Posterior vena cava (tissue), 2 donors: ENCODE measurements at regions of chr1 and their contacts with region 1.

Region 1: DNA sequence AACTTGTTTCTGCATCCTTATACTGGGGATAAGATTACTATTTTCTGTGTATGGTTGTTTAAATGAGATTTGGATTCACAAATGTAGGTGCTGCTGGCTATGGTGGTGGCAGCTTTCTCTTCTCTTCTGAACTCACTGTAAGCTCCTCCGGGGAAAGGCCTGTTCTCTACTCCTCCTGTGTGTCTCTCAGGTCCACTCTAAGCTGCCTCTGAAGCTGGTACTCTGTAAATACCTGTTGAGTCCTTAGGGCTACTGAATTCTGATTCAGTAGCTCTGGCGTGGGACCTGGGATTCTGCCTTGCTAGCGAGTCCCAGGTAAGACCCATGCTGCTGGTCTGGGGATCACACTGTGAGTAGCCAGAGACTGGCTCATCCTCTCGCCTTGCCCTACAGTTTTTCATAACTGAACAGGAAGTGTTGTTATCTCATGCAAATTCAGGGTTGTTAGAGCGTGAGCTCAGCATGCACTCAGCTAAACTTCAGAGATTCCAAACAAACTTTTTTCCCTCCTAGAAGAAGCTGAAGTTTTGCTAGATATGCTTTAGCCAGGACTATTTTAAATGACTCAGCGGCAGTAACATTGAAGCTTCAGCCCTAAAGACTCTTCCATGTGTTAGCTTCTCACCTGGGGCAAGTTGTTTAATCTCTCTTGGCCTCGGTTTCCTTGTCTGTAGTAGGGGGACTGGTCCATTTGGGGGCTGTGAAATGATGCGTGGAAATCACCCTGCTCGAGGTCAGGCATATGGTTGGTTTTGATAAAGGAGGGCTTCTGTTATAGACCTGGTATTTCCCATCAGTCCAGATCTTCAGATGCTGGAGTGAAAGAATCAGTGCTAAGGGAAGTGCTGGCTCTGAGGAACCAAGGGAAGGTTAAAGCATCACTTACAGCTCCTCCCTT is 271.5 kb upstream of the TMEM51 start:
- DNase-seq: no peak

Region 2: GRCh38 chr1:13583595-13583965 is 1298.4 kb before region 1 on chr1 and contains the start of gene PDPN:
- intact Hi-C with region 1: no loop called
- DNase-seq: peak; percentile 85
- total RNA-seq, gene PDPN: 28.5 to 40.9 TPM

Region 3: GRCh38 chr1:14648896-14649855 is 232.8 kb before region 1 on chr1:
- intact Hi-C with region 1: no loop called
- DNase-seq: no peak

Region 4: GRCh38 chr1:14661222-14661621 is 220.8 kb before region 1 on chr1:
- intact Hi-C with region 1: no loop called
- DNase-seq: no peak

Region 5: GRCh38 chr1:15835741-15836510 is 953.9 kb after region 1 on chr1:
- intact Hi-C with region 1: loop called in 1 of 2 experiments (anchors 10 kb)
- DNase-seq: peak; percentile 100